Head of caudate nucleus (tissue), 42 donors: ENCODE measurements at regions of chr15 and their contacts with region 1.

Region 1: DNA sequence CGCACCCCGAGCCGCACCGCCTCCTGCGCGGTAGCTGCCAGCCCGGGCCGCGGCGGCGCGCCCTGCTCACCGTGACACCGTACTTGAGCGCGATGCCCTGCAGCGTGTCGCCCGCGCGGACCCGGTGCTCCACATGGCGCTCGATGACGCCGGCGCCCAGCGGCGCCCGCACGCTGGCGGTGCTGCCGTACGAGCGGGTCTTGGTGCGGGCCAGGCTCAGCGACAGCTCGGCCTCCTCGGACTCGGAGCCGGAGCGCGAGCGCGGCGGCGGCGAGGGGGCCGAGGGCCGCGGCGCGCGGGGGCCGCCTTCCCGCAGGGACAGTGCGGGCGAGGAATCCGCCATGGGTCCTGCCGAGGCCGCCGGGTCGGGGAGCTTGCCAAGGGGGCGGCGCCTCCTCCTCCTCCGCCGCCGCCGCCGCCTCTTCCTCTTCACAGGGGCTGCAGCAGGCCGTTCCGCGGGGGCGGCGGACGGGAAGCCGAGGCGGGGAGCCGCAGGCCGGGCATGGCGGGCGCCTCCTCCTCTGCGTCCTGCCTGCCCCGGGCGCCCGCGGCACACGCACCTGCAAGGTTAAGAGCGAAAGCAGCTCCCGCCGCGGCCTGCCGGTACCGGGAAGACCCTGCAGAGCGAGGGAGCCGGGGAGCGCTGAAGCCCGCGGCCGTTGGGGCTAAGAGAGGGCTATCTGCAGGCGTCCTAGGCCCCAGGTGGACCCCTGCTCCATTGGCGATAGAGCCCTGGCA is at the start of gene LYSMD2:
- DNase-seq: peak in 40 of 42 donors; percentile 59 to 90 (median 77)

Region 2: DNA sequence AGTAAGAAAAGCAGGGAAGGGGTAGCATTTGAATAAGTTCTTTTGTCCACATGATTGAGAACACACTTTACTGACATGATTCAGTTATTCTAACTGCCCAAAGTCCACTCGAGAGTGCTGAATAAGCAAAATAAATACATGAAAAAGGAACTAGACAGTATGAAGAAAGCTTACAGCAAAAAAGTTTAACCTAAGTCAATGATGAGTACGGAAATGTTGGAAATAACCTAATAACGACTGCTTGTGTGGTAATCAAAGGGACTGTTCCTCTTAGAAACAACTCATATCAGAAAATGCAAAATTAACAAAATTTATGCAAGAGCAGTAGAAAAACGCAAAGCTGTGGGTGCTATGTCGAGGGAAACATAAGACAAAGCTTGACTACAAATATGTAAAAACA is 151.5 kb before region 1 on chr15:
- intact Hi-C with region 1: no loop called
- DNase-seq: no peak

Region 3: DNA sequence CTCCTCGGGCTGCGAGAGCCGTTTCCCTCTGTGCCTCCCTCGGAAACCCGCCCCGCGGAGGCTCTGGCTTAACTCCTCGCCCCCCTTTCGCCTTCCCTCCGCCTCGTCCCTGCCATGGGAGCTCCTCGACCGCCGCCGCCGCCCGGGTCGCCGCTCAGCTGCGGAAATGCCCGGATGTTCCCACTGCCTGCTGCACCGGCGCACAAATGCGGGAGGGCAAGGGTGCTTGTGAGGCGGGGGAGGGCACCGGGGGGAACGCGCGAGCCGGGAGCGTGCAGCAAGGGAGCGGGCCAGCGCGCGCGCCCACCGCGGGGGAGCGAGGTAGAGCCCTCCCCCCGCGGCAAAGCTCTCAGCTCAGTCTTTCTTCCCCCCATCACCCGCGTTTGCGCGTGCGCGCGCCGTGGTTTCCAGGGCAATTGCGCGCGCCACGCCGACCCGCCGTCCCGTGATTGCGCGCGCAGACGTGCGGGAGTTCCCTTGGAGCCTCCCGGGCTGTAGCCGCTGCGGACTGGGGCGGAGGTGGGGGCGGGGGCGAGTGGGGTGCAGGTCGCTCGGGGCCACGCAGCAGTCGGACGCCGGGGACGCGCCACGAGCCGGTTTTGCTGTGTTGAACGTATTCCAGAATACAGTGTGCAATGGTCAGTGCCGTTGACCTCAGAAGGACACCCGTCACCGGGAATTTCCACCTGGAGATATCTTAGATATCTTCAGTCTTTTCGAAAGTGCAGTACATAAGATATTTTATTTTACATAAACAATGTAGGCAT is 114.7 kb before region 1 on chr15 and contains the start of gene DMXL2:
- intact Hi-C with region 1: loop called (anchors 10 kb)
- DNase-seq: peak; percentile 72 to 96 (median 92)

Region 4: GRCh38 chr15:51771773-51772172 is 34.3 kb after region 1 on chr15:
- intact Hi-C with region 1: loop called (anchors 5 kb)
- DNase-seq: no peak

Region 5: DNA sequence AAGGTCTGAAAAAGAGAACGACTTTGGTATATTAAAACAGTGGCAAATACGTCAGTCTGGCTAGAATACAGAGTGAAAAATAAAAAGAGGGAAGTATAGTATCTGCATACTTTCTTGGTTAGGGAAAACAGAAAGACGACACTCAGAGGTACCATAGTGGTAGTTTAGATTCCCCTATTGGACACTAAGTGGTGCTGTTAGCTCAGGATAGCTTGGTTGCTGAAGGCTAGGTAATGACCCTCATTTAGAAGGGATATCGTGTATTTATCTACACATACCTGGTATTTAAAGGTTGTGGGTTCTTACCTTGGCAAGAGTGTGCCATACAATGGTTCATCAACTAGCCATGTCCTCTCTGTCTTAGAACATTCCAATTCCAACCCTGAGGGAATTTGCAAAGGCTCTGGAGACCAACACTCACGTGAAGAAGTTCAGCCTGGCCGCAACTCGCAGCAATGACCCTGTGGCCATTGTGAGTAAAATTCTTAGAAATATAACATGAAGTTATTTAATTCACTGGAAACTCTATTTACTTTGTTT is 45.0 kb after region 1 on chr15:
- intact Hi-C with region 1: no loop called
- DNase-seq: no peak

Region 6: DNA sequence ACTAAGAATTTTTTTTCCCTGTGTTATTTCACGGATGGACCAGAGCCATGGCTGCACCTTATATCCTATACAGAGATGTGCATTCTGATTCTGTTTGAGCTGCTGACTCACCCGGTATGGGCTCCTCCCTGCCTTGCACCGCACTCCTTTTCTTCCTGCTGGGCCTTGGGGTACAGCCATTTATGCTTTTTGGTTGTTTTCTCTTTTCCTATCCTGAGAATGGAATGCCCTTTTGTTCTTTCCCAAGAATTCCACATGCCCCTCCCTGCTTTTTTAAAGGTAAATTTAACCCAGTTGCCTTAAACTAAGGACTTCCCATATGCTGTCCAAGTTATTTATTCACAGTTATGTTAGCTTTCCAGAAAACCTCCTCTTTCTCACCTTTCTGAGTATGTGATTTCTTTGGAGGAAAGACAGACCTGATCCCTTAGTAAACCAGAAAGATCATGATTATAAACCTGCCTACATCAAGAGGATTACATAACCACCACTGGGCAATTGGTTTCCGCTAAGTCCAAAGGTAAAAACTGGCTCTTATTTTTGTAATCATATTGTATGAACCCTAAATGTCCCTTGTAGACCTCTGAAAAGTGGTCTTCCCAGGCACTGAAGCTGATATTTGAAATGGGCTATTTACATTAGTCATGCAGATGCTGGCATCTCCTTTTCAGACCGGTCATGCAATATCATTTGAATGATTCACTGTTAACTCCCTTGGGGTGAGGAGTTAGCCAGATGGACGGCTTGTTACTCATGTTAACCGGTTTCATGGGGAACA is 137.5 kb after region 1 on chr15:
- intact Hi-C with region 1: no loop called
- DNase-seq: no peak

Region 7: GRCh38 chr15:51888593-51889195 is 151.2 kb after region 1 on chr15:
- intact Hi-C with region 1: no loop called
- DNase-seq: no peak